ENCODE measurements at regions of chr21 and their contacts with region 1.

Region 1: GRCh38 chr21:17264001-17264581 is 248.8 kb upstream of the CXADR start:
- DNase-seq: no peak
- ATAC-seq: no peak
- H3K4me3 ChIP-seq: no peak overlapping the region
- H3K4me3 Mint-ChIP-seq: no peak overlapping the region
- H3K27ac ChIP-seq: no peak overlapping the region
- H3K27ac Mint-ChIP-seq: no peak overlapping the region
- H3K4me1 ChIP-seq: no peaks in the 10 kb centered on the region
- H3K4me1 Mint-ChIP-seq: no peaks in the 10 kb centered on the region
- H3K27me3 ChIP-seq: no peaks in the 10 kb centered on the region
- H3K27me3 Mint-ChIP-seq: no peaks in the 10 kb centered on the region
- CTCF ChIP-seq: no peak

Region 2: DNA sequence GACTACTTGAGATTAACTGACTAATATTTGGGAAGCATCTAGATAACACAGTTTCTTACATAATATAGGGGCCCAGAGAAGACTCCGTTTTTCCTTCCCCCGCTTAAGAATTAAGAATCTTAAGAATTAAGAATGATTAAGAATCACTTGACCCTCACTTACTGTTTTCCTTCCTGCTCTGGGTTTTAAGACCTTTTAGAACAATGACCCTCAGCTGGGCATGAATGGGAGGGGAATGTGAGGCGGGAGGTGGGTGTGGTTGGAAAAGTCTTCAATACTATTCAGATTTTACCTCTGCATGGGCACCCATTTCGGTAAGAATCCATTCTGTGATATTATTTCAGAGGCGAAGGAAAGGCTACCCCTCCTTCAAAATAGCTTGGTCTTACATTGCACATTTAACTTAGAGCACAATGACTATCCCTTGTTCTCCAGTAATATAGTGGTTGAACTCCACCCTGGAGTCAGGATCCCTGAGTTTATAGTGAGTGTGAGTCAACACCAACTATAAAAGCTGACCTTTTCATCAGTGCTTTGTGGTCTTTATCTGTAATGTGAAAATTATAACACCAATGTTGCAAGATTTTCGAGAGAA is 712.9 kb before region 1 on chr21:
- CTCF ChIA-PET with region 1: no interaction called
- POLR2A ChIA-PET with region 1: no interaction called
- intact Hi-C with region 1: no loop called
- DNase-seq: no peak
- ATAC-seq: no peak
- H3K4me3 ChIP-seq: no peak overlapping the region
- H3K4me3 Mint-ChIP-seq: no peak overlapping the region
- H3K27ac ChIP-seq: no peak overlapping the region
- H3K27ac Mint-ChIP-seq: no peak overlapping the region
- H3K4me1 ChIP-seq: no peaks in the 10 kb centered on the region
- H3K4me1 Mint-ChIP-seq: no peaks in the 10 kb centered on the region
- H3K27me3 ChIP-seq: no peaks in the 10 kb centered on the region
- H3K27me3 Mint-ChIP-seq: no peaks in the 10 kb centered on the region
- CTCF ChIP-seq: no peak

Region 3: DNA sequence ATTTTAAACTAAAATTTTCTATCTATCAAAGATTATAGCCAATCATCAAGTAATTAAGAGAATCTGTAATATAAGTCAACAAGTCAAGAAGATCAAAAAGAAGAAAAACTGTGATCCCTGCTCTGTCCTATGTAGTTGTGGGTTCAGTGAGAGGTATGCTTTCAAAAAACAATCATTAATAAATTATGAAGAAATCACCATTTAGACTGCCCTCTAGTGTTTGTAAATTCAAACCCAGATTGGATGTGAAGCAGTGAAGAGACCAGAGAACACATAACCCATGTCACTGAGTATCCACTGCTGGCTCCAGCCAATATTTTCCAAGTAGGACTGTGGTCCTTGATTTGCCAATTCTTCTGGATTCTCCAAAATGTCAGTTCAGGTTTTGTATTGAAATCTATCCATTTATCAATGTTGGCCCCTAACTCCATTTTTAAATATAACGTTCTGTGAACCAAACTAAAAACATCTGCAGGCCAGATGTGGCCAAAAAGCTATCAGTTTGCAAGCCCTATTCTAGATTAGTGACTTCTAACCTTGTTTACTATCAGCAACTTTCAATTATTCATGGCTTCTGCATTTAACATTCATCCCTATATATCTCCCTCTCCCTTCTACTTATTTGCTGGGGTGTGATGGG is 218.8 kb before region 1 on chr21:
- CTCF ChIA-PET with region 1: no interaction called
- POLR2A ChIA-PET with region 1: no interaction called
- intact Hi-C with region 1: no loop called
- DNase-seq: no peak
- ATAC-seq: no peak
- H3K4me3 ChIP-seq: no peak overlapping the region
- H3K4me3 Mint-ChIP-seq: no peak overlapping the region
- H3K27ac ChIP-seq: no peak overlapping the region
- H3K27ac Mint-ChIP-seq: no peak overlapping the region
- H3K4me1 ChIP-seq: no peaks in the 10 kb centered on the region
- H3K4me1 Mint-ChIP-seq: no peaks in the 10 kb centered on the region
- H3K27me3 ChIP-seq: no peaks in the 10 kb centered on the region
- H3K27me3 Mint-ChIP-seq: no peaks in the 10 kb centered on the region
- CTCF ChIP-seq: no peak

Region 4: DNA sequence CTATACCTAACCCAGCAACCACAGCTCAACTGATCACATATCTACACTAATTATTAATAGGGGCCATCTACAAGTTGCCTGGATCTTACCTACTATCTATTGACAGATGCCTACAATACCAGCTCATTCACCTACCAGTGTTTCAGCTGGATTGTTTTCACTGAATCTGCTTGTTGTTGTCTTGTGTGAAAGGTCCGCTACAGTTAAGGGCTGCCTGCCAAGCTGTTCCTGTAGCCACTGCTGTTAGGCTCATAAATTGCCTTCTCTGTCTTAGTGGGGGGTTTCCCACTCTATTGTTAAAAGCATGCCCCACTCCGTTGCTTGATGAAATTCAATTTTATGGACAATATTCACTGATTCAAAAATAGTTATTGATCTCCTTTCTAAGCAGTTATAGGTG is 1339.2 kb after region 1 on chr21:
- CTCF ChIA-PET with region 1: no interaction called
- POLR2A ChIA-PET with region 1: no interaction called
- intact Hi-C with region 1: loop called (anchors 5 kb)
- DNase-seq: no peak
- ATAC-seq: no peak
- H3K4me3 ChIP-seq: no peak overlapping the region
- H3K4me3 Mint-ChIP-seq: no peak overlapping the region
- H3K27ac ChIP-seq: no peak overlapping the region
- H3K27ac Mint-ChIP-seq: no peak overlapping the region
- H3K4me1 ChIP-seq: no peaks in the 10 kb centered on the region
- H3K4me1 Mint-ChIP-seq: no peaks in the 10 kb centered on the region
- H3K27me3 ChIP-seq: no peaks in the 10 kb centered on the region
- H3K27me3 Mint-ChIP-seq: no peaks in the 10 kb centered on the region
- CTCF ChIP-seq: no peak

Measured in B cell (primary cell).